ENCODE measurements at regions of chr3 and their contacts with region 1.

Region 1: DNA sequence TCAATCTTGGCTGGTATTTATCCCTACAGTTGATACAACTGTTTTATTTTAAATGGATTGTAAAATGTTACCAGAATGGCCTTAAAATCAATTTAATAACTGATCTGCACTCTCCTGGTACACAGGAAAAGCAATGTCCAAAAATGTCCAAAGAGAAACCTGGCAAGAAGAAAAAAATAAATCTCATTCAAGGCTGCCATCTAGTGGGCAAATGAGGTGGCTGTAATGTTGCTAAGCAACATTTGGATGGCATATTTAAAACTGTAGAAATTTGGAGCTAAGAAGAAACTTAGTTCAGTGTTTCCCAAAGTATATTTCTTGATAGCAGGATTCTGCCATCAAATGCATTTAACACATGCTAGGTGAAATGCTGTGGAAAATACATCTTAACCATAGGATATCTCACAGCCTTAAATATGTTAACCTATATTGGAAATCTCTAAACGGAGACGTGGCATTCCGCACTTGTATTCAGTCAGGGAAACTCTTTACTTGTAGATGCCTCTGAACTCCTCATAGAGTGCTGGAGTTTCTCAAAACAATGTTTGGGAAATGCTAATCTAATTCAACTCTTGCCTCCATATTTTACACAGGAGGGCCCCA is 216.8 kb downstream of the ERC2 start:
- DNase-seq: peak; percentile 33
- ATAC-seq: no peak
- H3K4me3 Mint-ChIP-seq: no peak overlapping the region
- H3K27ac Mint-ChIP-seq: no peak overlapping the region
- H3K4me1 Mint-ChIP-seq: no peaks in the 10 kb centered on the region
- H3K27me3 Mint-ChIP-seq: no peaks in the 10 kb centered on the region
- CTCF ChIP-seq: peak; percentile 86

Region 2: GRCh38 chr3:54853573-54854404 is 1397.7 kb before region 1 on chr3:
- CTCF ChIA-PET with region 1: interaction called, 6 read pairs
- POLR2A ChIA-PET with region 1: no interaction called
- intact Hi-C with region 1: loop called (anchors 10 kb)
- DNase-seq: peak; percentile 66
- ATAC-seq: no peak
- H3K4me3 Mint-ChIP-seq: no peak overlapping the region
- H3K27ac Mint-ChIP-seq: no peak overlapping the region
- H3K4me1 Mint-ChIP-seq: no peaks in the 10 kb centered on the region
- H3K27me3 Mint-ChIP-seq: peaks cover 5% of the 10 kb centered on the region
- CTCF ChIP-seq: peak; percentile 79

Region 3: GRCh38 chr3:55485211-55485791 is 766.1 kb before region 1 on chr3:
- CTCF ChIA-PET with region 1: interaction called, 6 read pairs
- POLR2A ChIA-PET with region 1: no interaction called
- intact Hi-C with region 1: loop called (anchors 10 kb)
- DNase-seq: peak; percentile 64
- ATAC-seq: peak; percentile 78
- H3K4me3 Mint-ChIP-seq: no peak overlapping the region
- H3K27ac Mint-ChIP-seq: no peak overlapping the region
- H3K4me1 Mint-ChIP-seq: peaks cover 17% of the 10 kb centered on the region
- H3K27me3 Mint-ChIP-seq: peaks cover 77% of the 10 kb centered on the region
- CTCF ChIP-seq: peak; percentile 51

Region 4: DNA sequence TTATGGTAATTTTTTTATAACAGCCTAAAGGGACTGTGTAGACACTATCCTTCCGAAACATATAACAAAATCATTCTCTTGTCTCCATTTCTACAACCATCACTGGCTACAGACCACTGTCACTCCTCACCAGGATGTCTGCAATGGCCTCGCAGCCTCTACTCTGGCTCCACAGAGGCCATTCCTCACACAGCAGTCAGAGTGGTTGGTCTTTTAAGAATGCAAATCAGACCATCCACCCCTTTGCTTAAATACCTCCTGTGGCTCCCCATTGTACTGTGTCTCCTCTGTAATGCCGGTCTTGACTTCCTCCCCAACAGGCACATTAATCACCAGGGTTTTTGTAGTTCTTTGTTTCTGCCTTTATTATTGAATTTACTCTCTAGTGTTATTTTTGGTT is 128.0 kb before region 1 on chr3:
- CTCF ChIA-PET with region 1: no interaction called
- POLR2A ChIA-PET with region 1: no interaction called
- intact Hi-C with region 1: no loop called
- DNase-seq: no peak
- ATAC-seq: no peak
- H3K4me3 Mint-ChIP-seq: no peak overlapping the region
- H3K27ac Mint-ChIP-seq: no peak overlapping the region
- H3K4me1 Mint-ChIP-seq: no peaks in the 10 kb centered on the region
- H3K27me3 Mint-ChIP-seq: no peaks in the 10 kb centered on the region
- CTCF ChIP-seq: no peak

Region 5: GRCh38 chr3:56238299-56238698 is 13.1 kb before region 1 on chr3:
- CTCF ChIA-PET with region 1: interaction called, 14 read pairs
- POLR2A ChIA-PET with region 1: no interaction called
- intact Hi-C with region 1: no loop called
- DNase-seq: no peak
- ATAC-seq: no peak
- H3K4me3 Mint-ChIP-seq: no peak overlapping the region
- H3K27ac Mint-ChIP-seq: no peak overlapping the region
- H3K4me1 Mint-ChIP-seq: no peaks in the 10 kb centered on the region
- H3K27me3 Mint-ChIP-seq: peaks cover 8% of the 10 kb centered on the region
- CTCF ChIP-seq: no peak

Measured in activated CD8-positive, alpha-beta T cell treated with anti-CD3 and anti-CD28 coated beads for 36 hours (primary cell).